H1 (cell line): ENCODE measurements at regions of chr14 and their contacts with region 1.

Region 1: DNA sequence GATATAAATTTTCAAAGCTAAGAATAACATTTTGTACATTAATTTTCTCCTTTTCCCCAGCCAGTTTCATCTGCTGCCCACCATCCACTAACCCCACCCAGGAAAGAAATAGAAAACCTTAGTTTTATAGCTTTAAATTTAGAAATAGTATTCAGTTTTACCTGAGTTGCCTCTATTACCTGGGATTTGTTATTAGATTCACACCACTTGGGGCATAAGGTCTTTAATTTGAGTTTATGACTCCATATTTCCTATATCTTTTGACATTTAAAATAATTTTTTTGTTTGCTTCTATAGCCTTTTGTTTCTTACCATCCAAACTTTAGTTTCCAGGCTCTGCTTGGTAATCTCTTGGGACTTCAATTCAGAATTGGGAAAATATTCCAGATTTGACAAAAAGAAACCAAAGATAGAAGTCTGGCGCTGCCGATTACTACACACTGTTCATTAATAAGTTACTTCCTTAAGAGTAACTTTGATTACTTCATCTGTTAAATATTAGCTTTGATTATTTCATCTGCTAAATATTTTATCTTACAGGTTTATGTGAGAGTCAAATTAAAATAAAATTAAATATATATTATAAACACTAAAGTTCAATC is 485.5 kb upstream of the FOXG1 start:
- DNase-seq: no peak
- H3K4me3 ChIP-seq: no peak overlapping the region
- H3K27ac ChIP-seq: no peak overlapping the region
- H3K4me1 ChIP-seq: no peaks in the 10 kb centered on the region
- H3K27me3 ChIP-seq: no peaks in the 10 kb centered on the region
- CTCF ChIP-seq: no peak
- EP300 ChIP-seq: no peak
- POLR2A ChIP-seq: no peak
- RAD21 ChIP-seq: no peak

Region 2: GRCh38 chr14:28294834-28295440 is 13.8 kb after region 1 on chr14:
- CTCF ChIA-PET with region 1: interaction called, 11 read pairs
- POLR2A ChIA-PET with region 1: no interaction called
- DNase-seq: no peak
- H3K4me3 ChIP-seq: no peak overlapping the region
- H3K27ac ChIP-seq: no peak overlapping the region
- H3K4me1 ChIP-seq: no peaks in the 10 kb centered on the region
- H3K27me3 ChIP-seq: no peaks in the 10 kb centered on the region
- CTCF ChIP-seq: peak in 2 of 3 experiments; percentile 49 to 66; a peak in 3 of 4 replicates
- EP300 ChIP-seq: no peak
- POLR2A ChIP-seq: no peak
- RAD21 ChIP-seq: peak; percentile 61 to 66